Activated CD4-positive, alpha-beta T cell treated with anti-CD3 and anti-CD28 coated beads for 36 hours (primary cell): ENCODE measurements at regions of chr12 and their contacts with region 1.

Region 1: GRCh38 chr12:118135788-118136558 is at the start of gene PEBP1:
- DNase-seq: peak; percentile 97
- ATAC-seq: peak; percentile 99
- H3K4me3 Mint-ChIP-seq: peak within 1 kb of the TSS; percentile 88
- H3K27ac Mint-ChIP-seq: peak within 1 kb of the TSS; percentile 91
- H3K4me1 Mint-ChIP-seq: peaks cover 33% of the 10 kb centered on the region
- H3K27me3 Mint-ChIP-seq: no peaks in the 10 kb centered on the region
- total RNA-seq, gene PEBP1: 117 to 134 TPM

Region 2: GRCh38 chr12:117190210-117190781 is 945.7 kb before region 1 on chr12 and contains the start of gene FBXO21:
- CTCF ChIA-PET with region 1: no interaction called
- POLR2A ChIA-PET with region 1: no interaction called
- intact Hi-C with region 1: loop called in 1 of 2 experiments (anchors 10 kb)
- DNase-seq: peak; percentile 96
- ATAC-seq: peak; percentile 97
- H3K4me3 Mint-ChIP-seq: peak within 1 kb of the TSS; percentile 95
- H3K27ac Mint-ChIP-seq: peak within 1 kb of the TSS; percentile 90
- H3K4me1 Mint-ChIP-seq: peaks cover 27% of the 10 kb centered on the region
- H3K27me3 Mint-ChIP-seq: no peaks in the 10 kb centered on the region
- total RNA-seq, gene FBXO21: 22.8 to 28.2 TPM

Region 3: DNA sequence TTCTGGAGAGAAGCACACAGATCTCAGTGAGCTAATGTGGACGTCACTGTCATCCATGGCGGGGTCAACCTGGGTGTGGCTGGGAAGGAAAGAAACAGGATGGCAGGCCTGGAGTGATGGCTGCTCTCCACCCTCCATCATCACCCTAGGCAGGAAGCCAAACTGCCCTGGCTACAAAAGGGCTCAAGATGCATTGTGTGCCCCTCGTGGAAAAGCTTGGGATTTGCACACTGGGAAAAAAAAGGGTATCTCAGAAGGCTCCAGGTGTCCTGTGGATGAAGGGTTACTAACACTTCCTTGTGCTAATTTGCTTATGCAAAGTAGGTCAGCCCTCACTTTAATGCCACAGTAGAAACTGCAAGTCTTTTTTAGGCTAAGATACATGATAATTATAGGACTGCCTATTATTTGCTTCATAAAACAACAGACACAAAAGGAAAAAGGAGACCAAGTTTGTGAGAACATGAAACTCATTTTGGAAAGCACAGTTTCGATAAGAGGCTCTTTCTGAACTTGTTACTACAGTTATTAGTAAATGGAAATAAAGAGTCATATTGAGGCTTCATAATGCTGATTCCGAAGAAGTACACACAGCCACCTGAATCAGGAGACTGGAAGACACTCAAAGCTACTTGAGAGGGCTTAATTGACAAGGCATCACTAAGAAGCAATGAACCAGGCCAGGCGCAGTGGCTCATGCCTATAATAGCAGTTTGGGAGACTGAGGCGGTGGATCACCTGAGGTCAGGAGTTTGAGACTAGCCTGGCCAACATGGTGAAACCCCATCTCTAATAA is 100.5 kb before region 1 on chr12:
- CTCF ChIA-PET with region 1: no interaction called
- POLR2A ChIA-PET with region 1: no interaction called
- intact Hi-C with region 1: no loop called
- DNase-seq: peak; percentile 60
- ATAC-seq: peak; percentile 89
- H3K4me3 Mint-ChIP-seq: peak overlapping the region; percentile 22
- H3K27ac Mint-ChIP-seq: peak overlapping the region; percentile 89
- H3K4me1 Mint-ChIP-seq: peaks cover 55% of the 10 kb centered on the region
- H3K27me3 Mint-ChIP-seq: no peaks in the 10 kb centered on the region

Region 4: DNA sequence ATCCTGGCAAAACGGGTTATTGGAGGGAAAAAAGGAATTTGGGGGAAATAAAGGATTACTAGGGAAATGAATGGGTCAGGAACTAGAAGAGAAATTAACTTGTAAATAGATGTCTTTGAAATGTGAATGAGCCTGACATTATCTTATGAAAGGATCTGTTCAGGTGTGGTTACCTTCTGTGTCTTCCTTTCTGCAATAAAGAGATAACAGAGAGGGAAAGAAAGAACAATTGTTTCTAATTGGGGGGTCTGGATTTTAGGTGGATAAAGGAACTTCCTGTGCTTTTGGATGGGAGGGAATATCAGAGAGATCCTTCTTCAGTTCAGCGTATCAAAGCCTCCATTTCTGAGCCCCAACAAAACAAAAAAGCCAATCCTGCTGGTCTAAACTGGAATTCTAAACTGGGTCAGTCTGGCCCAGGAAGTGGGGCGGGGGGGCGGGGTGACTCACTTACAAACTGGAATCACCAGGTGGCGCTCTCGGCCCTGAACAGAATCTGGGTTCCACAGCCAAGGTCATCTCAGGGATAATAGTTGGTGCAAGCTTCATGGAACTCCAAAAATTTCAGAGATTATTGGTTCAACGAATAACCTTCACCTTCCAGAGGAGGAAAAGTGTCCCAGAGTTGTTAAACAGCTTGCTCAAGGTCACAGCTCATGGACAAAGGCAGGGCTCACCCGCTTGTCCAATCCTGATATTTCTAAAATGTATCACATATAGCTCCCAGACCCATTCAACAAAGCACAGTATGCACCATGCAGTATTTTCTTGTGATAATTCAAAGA is 15.2 kb before region 1 on chr12:
- CTCF ChIA-PET with region 1: interaction called, 18 read pairs
- POLR2A ChIA-PET with region 1: interaction called, 3 read pairs
- intact Hi-C with region 1: loop called in 1 of 2 experiments (anchors 1 kb)
- DNase-seq: peak; percentile 82
- ATAC-seq: peak; percentile 75
- H3K4me3 Mint-ChIP-seq: no peak overlapping the region
- H3K27ac Mint-ChIP-seq: peak overlapping the region; percentile 77
- H3K4me1 Mint-ChIP-seq: peaks cover 8% of the 10 kb centered on the region
- H3K27me3 Mint-ChIP-seq: no peaks in the 10 kb centered on the region

Region 5: DNA sequence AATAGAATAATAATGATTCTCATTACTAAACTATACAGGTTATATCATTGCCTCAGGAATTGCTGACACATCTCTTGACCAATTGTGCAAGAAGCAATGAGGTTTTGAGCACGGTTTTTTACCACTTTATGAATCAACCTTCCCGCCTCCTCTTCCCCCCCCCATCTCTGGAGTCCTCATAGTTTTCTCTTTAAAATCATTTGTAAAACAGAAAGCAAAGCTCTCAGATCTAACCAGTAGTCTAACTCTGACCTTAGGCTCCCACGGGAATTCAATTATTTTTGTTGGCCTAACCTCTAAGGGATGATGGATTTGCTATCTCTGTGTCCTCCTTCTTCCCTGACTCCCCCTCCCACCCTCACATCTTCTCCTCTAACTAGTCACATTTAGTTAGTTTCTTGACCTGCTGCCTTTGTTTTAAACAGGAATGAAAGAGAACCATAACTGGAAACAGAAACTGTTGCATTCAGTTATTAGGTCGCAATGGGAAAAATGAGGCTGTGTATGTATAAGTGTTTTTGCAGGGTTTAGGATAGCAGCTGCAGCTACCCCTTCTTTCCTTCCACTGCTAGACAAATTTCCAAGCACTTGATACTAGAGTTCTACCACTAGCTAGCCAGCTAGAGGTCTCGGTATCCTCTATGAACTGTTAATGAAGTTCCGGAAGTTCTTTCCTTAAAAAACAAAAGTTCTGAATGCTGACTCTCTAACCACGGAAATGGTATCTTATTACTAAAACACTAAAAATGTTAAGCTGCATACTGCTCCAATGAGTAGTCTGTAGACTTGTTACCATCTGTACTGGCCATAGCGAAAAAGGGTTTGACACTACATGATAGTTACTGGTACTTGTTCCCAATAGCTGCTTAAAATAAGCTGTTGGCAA is 171.3 kb after region 1 on chr12:
- CTCF ChIA-PET with region 1: no interaction called
- POLR2A ChIA-PET with region 1: no interaction called
- intact Hi-C with region 1: loop called in 1 of 2 experiments (anchors 2 kb)
- DNase-seq: peak; percentile 71
- ATAC-seq: peak; percentile 80
- H3K4me3 Mint-ChIP-seq: peak overlapping the region; percentile 66
- H3K27ac Mint-ChIP-seq: peak overlapping the region; percentile 92
- H3K4me1 Mint-ChIP-seq: peaks cover 43% of the 10 kb centered on the region
- H3K27me3 Mint-ChIP-seq: no peaks in the 10 kb centered on the region

Region 6: GRCh38 chr12:119667577-119668323 is 1531.8 kb after region 1 on chr12 and contains the start of gene PRKAB1:
- CTCF ChIA-PET with region 1: no interaction called
- POLR2A ChIA-PET with region 1: no interaction called
- intact Hi-C with region 1: loop called in 1 of 2 experiments (anchors 10 kb)
- DNase-seq: peak; percentile 98
- ATAC-seq: peak; percentile 96
- H3K4me3 Mint-ChIP-seq: peak within 1 kb of the TSS; percentile 91
- H3K27ac Mint-ChIP-seq: peak within 1 kb of the TSS; percentile 91
- H3K4me1 Mint-ChIP-seq: peaks cover 48% of the 10 kb centered on the region
- H3K27me3 Mint-ChIP-seq: no peaks in the 10 kb centered on the region
- total RNA-seq, gene PRKAB1: 18.0 to 21.7 TPM